ENCODE measurements at regions of chr7 and their contacts with region 1.

Region 1: DNA sequence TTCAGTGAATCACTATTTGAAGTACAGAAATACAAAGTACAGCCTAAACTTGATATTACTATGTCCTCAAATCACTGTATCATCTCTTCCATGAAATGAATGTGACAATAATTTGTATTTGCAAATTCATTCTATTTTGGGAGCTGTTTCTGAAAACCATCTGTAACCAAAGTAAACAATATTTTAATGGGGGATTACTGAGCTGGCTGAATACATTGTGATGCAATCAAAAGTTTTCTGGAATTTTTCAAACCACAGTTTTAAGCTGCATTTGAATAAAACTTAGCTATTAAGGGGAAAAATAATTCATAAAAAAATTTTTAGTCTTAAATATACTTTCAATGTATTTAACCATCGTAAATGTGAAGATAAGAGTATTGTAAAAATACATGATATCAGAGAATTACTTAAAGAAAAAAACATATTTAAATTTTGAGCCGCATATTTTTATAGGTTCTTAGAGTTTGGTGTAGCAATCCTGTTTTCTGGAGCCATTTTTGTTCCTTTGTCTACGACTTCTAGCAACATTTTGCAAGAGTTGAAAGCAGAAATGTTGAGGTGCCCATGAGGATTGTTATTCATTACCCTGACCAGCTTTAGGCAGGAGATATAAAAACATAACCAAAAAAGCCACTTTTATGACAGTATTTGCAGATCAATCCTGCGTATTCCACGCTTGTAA is 45.9 kb upstream of the AGMO start:
- DNase-seq: no peak
- H3K4me3 ChIP-seq: no peak overlapping the region
- H3K27ac ChIP-seq: no peak overlapping the region
- H3K4me1 ChIP-seq: no peaks in the 10 kb centered on the region
- H3K27me3 ChIP-seq: no peaks in the 10 kb centered on the region
- CTCF ChIP-seq: no peak

Region 2: DNA sequence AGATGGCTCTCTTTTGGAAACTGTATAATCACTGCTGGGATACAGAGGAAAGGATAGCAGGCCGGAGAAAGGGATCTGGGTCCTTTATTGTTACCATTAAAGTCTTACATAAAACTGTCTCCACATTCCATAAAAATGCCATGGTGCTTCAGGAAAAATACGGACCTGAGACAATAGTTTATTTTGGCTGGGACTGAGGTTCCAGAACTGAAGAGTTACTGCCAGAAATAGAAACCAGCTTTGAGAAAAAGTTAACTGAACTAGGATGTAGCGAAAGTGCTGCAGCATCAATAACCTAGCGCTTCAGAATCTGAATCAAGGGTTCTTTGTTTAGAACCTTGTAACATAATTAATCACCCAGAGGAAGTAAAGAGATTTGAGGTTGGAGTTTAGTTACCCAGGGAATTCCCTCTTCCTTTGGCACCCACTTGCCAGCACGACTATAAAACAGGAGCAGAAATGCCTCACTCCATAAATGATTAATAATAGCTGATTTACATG is 40.8 kb after region 1 on chr7:
- CTCF ChIA-PET with region 1: no interaction called
- POLR2A ChIA-PET with region 1: no interaction called
- intact Hi-C with region 1: loop called (anchors 5 kb)
- DNase-seq: no peak
- H3K4me3 ChIP-seq: no peak overlapping the region
- H3K27ac ChIP-seq: no peak overlapping the region
- H3K4me1 ChIP-seq: no peaks in the 10 kb centered on the region
- H3K27me3 ChIP-seq: no peaks in the 10 kb centered on the region
- CTCF ChIP-seq: no peak

Region 3: GRCh38 chr7:15662451-15662850 is 54.8 kb after region 1 on chr7:
- CTCF ChIA-PET with region 1: no interaction called
- POLR2A ChIA-PET with region 1: interaction called, 15 read pairs
- intact Hi-C with region 1: no loop called
- DNase-seq: peak in 1 of 2 experiments; percentile 21
- H3K4me3 ChIP-seq: no peak overlapping the region
- H3K27ac ChIP-seq: no peak overlapping the region
- H3K4me1 ChIP-seq: no peaks in the 10 kb centered on the region
- H3K27me3 ChIP-seq: no peaks in the 10 kb centered on the region
- CTCF ChIP-seq: no peak